K562 (cell line): ENCODE measurements at regions of chr15 and their contacts with region 1.

Region 1: DNA sequence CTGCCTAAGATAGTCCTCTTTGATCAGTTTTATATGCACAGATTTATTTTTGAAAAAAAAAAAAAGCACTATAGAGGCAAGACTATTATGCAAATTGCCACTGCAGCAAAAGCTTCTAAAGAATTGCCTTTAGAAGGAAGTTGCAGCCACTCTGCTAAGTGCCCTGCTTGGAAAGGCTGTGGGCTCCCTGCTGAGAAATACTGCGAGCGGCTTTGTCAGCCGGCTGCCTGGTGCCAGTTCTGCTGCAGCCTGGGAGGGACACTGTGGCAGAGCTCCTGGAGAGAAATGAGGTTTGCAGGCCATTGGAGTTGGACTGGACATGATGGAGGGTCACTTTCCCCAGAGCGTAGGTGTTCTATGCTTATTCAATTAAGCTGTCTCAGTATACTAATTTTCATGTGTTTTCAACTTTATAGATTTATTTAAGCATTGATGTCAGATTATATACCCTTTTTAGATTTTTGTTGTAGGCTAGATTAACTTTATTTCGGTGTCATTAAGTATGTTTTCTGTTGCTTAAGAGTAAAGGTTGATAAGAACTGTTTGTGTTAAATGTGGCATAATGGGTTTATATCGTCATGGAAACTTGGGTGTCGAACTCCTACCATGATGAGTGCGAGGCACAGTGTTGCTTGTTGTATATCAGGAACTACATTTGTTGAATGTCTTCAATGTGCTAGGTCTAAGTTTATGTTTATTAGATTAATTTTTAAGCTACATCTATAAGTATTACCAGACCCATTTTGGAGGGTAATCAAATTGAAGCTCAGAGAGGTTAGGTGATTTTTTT is 6.6 kb downstream of the MAP2K5 start:
- DNase-seq: no peak
- ATAC-seq: no peak
- H3K4me3 ChIP-seq: no peak overlapping the region
- H3K27ac ChIP-seq: peak overlapping the region; percentile 72; the same call in 1 of the 3 replicates
- H3K4me1 ChIP-seq: peaks cover 7 to 35% of the 10 kb centered on the region in 2 experiments; a peak in 4 of 5 replicates
- H3K27me3 ChIP-seq: no peaks in the 10 kb centered on the region
- CTCF ChIP-seq: no peak
- EP300 ChIP-seq: no peak
- POLR2A ChIP-seq: no peak
- RAD21 ChIP-seq: no peak

Region 2: GRCh38 chr15:67559158-67559557 is 10.1 kb after region 1 on chr15:
- CTCF ChIA-PET with region 1: no interaction called
- POLR2A ChIA-PET with region 1: interaction called, 13 read pairs
- in situ Hi-C with region 1: no loop called
- intact Hi-C with region 1: no loop called
- DNase-seq: no peak
- ATAC-seq: no peak
- H3K4me3 ChIP-seq: no peak overlapping the region
- H3K27ac ChIP-seq: no peak overlapping the region
- H3K4me1 ChIP-seq: no peaks in the 10 kb centered on the region; a peak in 1 of 5 replicates
- H3K27me3 ChIP-seq: no peaks in the 10 kb centered on the region
- CTCF ChIP-seq: no peak
- EP300 ChIP-seq: no peak
- POLR2A ChIP-seq: no peak
- RAD21 ChIP-seq: no peak